Colonic mucosa (tissue), 4 donors: ENCODE measurements at regions of chr20 and their contacts with region 1.

Region 1: DNA sequence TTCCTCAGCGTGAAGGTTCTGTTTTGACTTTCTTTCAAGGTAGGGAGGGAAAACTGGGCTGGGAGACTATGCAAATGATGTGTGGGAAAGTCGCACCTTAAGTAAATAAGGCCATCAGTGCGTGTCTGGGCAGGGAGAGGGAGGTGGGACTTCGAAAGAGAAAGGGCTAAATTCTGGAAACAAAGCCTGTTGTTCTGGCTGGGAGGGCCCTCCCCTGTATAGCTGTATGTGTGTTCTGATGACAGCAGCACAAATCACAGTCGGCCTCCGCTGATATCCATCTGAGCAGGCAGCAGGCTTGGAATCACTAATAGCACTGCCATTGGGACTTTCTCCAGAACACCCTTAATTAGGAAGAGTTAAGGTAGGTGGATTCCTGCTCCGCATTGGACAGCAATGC is 19.2 kb downstream of the JAG1 start:
- DNase-seq: peak; percentile 64
- H3K4me3 ChIP-seq: no peak overlapping the region
- H3K27ac ChIP-seq: peak overlapping the region; percentile 63
- H3K4me1 ChIP-seq: peaks cover 13% of the 10 kb centered on the region
- H3K27me3 ChIP-seq: no peaks in the 10 kb centered on the region
- CTCF ChIP-seq: no peak

Region 2: GRCh38 chr20:10553326-10553984 is 101.2 kb before region 1 on chr20:
- intact Hi-C with region 1: loop called (anchors 10 kb)
- DNase-seq: peak; percentile 70
- H3K4me3 ChIP-seq: no peak overlapping the region
- H3K27ac ChIP-seq: no peak overlapping the region
- H3K4me1 ChIP-seq: no peaks in the 10 kb centered on the region
- H3K27me3 ChIP-seq: no peaks in the 10 kb centered on the region
- CTCF ChIP-seq: peak; percentile 84

Region 3: DNA sequence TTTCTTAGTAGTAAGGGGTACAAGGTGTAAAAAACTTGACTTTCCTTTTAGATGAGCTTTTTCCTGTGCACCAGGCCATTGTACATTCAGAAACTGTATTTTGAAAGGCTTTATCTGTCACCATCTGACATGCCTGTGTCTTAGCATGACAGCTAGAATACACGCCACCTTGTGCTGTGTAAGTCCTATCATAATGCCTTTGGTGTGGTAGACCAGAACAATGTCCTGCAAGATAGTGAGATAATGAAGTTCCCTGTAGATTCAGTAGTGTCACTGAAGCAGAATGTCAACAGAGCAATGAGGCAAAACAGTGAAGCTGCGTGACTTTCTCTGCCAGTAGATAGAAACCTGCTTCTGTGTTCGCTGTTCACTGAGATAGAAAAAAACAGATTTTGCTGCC is 86.6 kb before region 1 on chr20:
- intact Hi-C with region 1: no loop called
- DNase-seq: no peak
- H3K4me3 ChIP-seq: no peak overlapping the region
- H3K27ac ChIP-seq: no peak overlapping the region
- H3K4me1 ChIP-seq: no peaks in the 10 kb centered on the region
- H3K27me3 ChIP-seq: no peaks in the 10 kb centered on the region
- CTCF ChIP-seq: no peak

Region 4: GRCh38 chr20:10578607-10579006 is 76.0 kb before region 1 on chr20:
- intact Hi-C with region 1: no loop called
- DNase-seq: no peak
- H3K4me3 ChIP-seq: no peak overlapping the region
- H3K27ac ChIP-seq: no peak overlapping the region
- H3K4me1 ChIP-seq: no peaks in the 10 kb centered on the region
- H3K27me3 ChIP-seq: no peaks in the 10 kb centered on the region
- CTCF ChIP-seq: no peak

Region 5: DNA sequence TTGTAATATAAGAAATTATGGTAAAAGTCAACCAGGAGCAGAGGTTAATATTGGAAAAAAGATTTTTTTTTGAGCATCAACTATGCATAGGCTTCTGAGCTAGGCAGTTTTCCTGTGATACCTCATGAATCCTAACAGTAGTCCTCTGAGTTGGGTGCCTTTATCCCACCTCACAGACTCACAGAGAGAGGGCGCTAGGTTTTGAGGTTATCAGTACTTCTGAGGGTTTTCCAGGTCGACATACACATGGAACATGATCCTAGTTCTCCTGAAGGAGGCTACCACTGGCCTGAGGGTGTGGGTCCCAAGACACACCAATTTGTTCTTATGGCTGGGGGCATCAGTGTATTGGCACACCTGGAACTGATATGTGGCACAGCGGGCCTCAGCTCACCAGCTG is 378.0 kb after region 1 on chr20:
- intact Hi-C with region 1: no loop called
- DNase-seq: no peak
- H3K4me3 ChIP-seq: no peak overlapping the region
- H3K27ac ChIP-seq: no peak overlapping the region
- H3K4me1 ChIP-seq: no peaks in the 10 kb centered on the region
- H3K27me3 ChIP-seq: no peaks in the 10 kb centered on the region
- CTCF ChIP-seq: no peak